ENCODE measurements at regions of chr11 and their contacts with region 1.

Region 1: DNA sequence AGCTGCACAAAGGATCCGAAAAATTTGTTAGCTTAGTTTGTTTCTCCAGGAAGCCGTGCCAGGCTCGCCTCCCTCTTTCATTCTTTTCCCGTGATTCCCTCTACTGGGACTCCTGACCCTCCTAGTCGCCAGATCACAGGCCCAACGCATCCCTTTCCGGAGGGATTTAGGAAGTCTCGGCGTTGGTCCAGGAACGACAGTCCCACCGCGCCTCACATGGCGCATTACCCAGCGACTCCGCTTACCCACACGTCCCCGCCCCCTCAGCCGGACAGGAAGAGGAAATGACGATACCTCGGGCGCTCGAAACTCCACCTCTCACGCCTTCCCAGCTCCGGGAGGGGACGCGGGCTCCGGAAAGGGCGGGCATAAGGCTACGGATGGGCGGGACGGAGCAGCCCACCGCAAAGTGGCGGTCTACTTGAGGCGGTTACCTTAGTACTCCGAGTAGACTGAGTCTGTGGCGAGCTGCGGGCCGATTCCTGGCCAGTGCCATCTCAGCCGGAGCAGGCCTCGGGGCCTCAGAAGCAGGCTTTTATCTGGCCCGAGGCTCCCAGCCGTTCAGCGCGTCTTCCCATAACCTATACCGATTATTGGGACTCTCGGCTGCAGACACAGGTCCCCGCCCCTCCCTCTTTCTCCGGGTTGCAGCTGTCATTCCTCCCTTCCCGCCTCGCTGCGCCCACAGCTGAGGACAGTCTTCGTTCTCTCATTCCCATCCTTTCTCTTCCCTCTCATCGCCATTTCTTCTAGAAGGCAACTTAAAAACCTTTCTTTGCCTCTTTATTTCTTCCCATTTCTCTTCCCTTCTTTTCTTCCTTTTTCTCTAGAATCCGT is at the start of gene CCDC15:
- DNase-seq: peak; percentile 88
- ATAC-seq: peak; percentile 100
- H3K4me3 Mint-ChIP-seq: no peak within 1 kb of the TSS
- H3K27ac Mint-ChIP-seq: no peak within 1 kb of the TSS
- H3K4me1 Mint-ChIP-seq: no peaks in the 10 kb centered on the region
- H3K27me3 Mint-ChIP-seq: peaks cover 4% of the 10 kb centered on the region
- CTCF ChIP-seq: no peak
- total RNA-seq, gene CCDC15: 0.51 and 0.71 TPM in 2 replicates

Region 2: DNA sequence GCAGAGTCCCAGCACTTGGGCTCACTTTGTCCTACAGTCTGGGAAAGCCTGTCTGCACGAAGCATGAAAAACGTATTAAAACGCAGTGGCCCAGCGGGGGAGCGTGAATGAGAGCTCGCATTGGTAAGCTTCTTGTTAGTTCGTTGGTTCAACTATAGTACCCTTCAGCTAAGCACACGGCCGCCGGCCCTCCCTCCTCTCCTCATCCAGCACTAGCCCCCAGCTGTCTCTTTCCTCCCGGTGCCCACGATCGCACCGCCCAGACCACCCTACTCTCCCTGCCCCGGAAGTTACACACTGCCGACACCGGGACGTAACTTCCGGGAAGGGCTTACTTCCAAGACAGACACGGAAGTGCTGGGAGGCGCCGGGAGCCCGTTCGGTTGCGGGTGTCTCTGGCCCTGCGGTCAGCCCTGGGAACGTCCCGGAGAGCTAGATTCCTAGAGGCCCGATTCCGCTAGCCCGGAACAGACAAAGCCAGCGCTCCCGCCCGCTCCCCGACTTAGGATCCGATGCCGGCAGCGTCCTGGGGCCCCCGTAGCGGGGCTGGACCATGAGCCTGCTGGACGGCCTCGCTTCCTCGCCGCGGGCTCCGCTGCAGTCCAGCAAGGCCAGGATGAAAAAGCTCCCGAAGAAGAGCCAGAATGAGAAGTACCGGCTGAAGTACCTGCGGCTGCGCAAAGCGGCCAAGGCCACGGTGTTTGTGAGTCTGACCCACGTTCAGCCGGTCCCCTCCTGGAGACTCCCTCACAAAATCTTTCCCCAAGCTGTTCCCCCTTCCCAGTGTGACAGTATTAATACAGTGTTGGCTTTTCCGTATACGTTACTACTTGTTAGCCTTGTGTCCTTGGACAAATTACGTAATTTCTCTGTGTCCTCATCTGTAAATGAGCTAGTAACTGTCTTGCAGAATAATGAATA is 331.2 kb before region 1 on chr11 and contains the start of gene TBRG1:
- CTCF ChIA-PET with region 1: no interaction called
- POLR2A ChIA-PET with region 1: interaction called, 4 read pairs
- intact Hi-C with region 1: loop called (anchors 2 kb)
- DNase-seq: peak; percentile 71
- ATAC-seq: peak; percentile 97
- H3K4me3 Mint-ChIP-seq: peak within 1 kb of the TSS; percentile 94
- H3K27ac Mint-ChIP-seq: peak within 1 kb of the TSS; percentile 91
- H3K4me1 Mint-ChIP-seq: peaks cover 27% of the 10 kb centered on the region
- H3K27me3 Mint-ChIP-seq: peaks cover 22% of the 10 kb centered on the region
- CTCF ChIP-seq: no peak
- total RNA-seq, gene TBRG1: 43.7 and 54.6 TPM in 2 replicates

Region 3: GRCh38 chr11:124800226-124800929 is 153.6 kb before region 1 on chr11 and contains the start of gene MSANTD2:
- CTCF ChIA-PET with region 1: no interaction called
- POLR2A ChIA-PET with region 1: interaction called, 6 read pairs
- intact Hi-C with region 1: loop called (anchors 5 kb)
- DNase-seq: peak; percentile 85
- ATAC-seq: peak; percentile 84
- H3K4me3 Mint-ChIP-seq: peak within 1 kb of the TSS; percentile 92
- H3K27ac Mint-ChIP-seq: peak within 1 kb of the TSS; percentile 92
- H3K4me1 Mint-ChIP-seq: peaks cover 26% of the 10 kb centered on the region
- H3K27me3 Mint-ChIP-seq: no peaks in the 10 kb centered on the region
- CTCF ChIP-seq: no peak
- total RNA-seq, gene MSANTD2: 17.7 and 21.0 TPM in 2 replicates

Region 4: DNA sequence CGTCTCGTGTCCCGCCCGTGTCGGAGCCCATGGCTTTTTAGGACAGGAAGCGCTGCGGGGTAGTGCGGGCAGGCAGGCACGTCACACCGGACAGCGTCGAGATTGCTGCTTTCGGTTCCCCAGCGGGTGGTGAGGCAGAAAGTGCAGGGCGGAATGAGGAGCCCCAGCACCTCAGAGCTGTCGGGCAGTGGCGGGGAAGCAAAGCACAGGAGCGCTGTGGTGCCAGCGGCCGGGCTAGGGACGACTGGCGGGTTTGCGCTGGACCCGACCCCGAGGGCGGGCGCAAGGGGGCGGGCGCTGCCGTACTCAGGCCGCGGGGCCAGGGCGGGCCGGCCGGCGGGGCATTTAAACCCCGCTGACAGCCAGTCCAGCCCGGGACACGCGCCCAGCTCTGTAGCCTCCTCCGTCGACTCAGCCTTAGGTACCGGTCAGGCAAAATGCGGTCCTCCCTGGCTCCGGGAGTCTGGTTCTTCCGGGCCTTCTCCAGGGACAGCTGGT is 109.0 kb after region 1 on chr11 and contains the start of gene SLC37A2:
- CTCF ChIA-PET with region 1: no interaction called
- POLR2A ChIA-PET with region 1: interaction called, 14 read pairs
- intact Hi-C with region 1: loop called (anchors 2 kb)
- DNase-seq: peak; percentile 64
- ATAC-seq: peak; percentile 95
- H3K4me3 Mint-ChIP-seq: peak within 1 kb of the TSS; percentile 86
- H3K27ac Mint-ChIP-seq: peak within 1 kb of the TSS; percentile 83
- H3K4me1 Mint-ChIP-seq: peaks cover 23% of the 10 kb centered on the region
- H3K27me3 Mint-ChIP-seq: peaks cover 9% of the 10 kb centered on the region
- CTCF ChIP-seq: no peak
- total RNA-seq, gene SLC37A2: 21.3 and 27.5 TPM in 2 replicates

Region 5: DNA sequence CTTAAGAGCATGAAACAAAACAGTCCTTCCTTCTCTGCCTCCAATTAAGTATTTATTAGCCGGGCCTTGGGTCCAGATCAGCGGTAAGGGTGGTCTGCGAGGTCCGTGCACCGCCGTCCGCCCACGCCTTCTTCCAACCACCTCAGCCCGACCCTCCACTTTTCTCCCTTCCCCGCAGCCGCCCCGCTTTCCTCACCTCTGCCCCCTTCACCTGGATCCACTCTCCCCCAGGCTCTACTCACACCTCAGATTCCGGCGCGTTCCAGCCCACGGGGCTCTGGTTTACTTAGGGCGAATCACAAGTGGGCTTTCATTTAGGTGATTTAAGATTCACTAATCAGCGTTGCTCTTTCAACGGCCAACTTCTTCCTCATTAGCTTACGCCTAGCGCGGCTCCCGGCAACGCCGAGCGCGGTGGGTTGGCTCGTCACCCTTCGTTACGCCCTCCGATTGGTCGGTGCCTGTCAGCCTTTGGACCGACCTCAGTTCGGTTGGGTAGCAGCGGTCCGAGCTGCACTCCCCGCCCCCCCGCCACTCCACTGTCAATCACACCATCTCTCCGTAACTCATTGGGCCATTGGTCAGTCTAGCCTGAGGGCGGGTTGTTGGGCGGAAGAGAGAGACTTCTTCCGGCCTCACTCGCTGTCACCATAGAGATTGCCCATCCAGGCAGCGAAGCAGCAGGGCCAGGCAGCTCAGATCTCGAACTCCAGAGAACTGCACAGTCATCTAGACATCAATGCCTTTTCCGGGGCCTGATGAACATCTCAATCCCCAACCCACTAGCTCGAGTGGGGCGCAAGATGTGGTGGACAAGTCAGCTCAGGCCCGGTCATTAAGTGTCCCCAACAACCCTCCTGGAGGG is 157.6 kb after region 1 on chr11 and contains the start of gene TMEM218:
- CTCF ChIA-PET with region 1: no interaction called
- POLR2A ChIA-PET with region 1: interaction called, 21 read pairs
- intact Hi-C with region 1: loop called (anchors 1 kb)
- DNase-seq: peak; percentile 82
- ATAC-seq: peak; percentile 96
- H3K4me3 Mint-ChIP-seq: peak within 1 kb of the TSS; percentile 98
- H3K27ac Mint-ChIP-seq: peak within 1 kb of the TSS; percentile 97
- H3K4me1 Mint-ChIP-seq: peaks cover 23% of the 10 kb centered on the region
- H3K27me3 Mint-ChIP-seq: peaks cover 4% of the 10 kb centered on the region
- CTCF ChIP-seq: no peak
- total RNA-seq, gene TMEM218: 18.8 and 20.1 TPM in 2 replicates

Region 6: GRCh38 chr11:126062679-126063506 is 1108.9 kb after region 1 on chr11 and contains the start of gene CDON:
- CTCF ChIA-PET with region 1: no interaction called
- POLR2A ChIA-PET with region 1: no interaction called
- intact Hi-C with region 1: loop called (anchors 5 kb)
- DNase-seq: peak; percentile 72
- ATAC-seq: peak; percentile 90
- H3K4me3 Mint-ChIP-seq: peak within 1 kb of the TSS; percentile 81
- H3K27ac Mint-ChIP-seq: no peak within 1 kb of the TSS
- H3K4me1 Mint-ChIP-seq: peaks cover 6% of the 10 kb centered on the region
- H3K27me3 Mint-ChIP-seq: peaks cover 38% of the 10 kb centered on the region
- CTCF ChIP-seq: no peak
- total RNA-seq, gene CDON: 0.24 and 0.27 TPM in 2 replicates

Region 7: DNA sequence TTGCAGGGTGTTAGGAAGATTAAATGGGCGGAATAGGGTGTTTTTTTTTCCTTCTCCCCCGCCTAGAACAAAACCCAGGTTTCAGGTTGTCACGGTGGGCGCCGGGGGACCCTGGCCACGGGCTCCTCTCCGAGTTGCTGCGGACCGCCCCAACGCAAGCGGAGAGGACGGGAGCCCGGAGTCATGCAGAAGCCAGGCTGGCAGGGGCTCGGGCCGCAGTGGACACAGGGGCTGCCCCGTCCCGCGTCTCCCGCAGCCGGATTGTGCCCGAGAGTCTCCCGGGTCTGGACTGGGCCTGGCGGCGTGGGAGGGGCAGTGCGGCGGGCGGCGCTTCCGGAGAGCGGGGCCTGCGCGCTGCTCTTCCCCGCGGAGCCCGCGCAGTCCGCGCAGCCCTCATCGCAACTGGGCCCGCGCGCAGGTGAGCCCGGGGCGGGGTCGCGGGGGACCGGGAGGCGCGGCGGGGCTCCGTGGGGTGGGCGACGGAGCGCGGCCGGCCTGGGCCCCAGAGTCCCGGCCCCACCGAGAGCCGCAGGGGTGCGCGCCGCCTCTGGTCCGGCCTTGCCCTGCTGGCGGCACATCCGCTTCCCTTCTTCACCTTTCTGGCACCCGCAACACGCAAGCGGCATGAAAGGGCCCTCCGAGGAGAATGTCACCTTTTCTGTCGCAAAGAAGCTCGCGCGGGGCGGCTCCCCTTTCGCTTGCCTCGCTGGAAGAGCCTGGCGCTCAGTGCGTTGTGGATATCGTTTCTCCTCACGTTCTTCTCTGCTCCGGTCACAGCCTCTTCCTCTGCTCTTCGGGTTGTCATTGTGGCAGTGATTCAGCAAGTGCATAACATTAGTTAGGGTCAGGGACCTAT is 1329.0 kb after region 1 on chr11 and contains the start of gene TIRAP:
- CTCF ChIA-PET with region 1: no interaction called
- POLR2A ChIA-PET with region 1: no interaction called
- intact Hi-C with region 1: loop called (anchors 10 kb)
- DNase-seq: peak; percentile 68
- ATAC-seq: peak; percentile 79
- H3K4me3 Mint-ChIP-seq: peak within 1 kb of the TSS; percentile 95
- H3K27ac Mint-ChIP-seq: peak within 1 kb of the TSS; percentile 93
- H3K4me1 Mint-ChIP-seq: peaks cover 40% of the 10 kb centered on the region
- H3K27me3 Mint-ChIP-seq: no peaks in the 10 kb centered on the region
- CTCF ChIP-seq: no peak
- total RNA-seq, gene TIRAP: 16.6 and 18.3 TPM in 2 replicates

Measured in activated B cell treated with CpG ODN at 0.5 μM for 24 hours (primary cell).